T-cell (primary cell): ENCODE measurements at regions of chr17 and their contacts with region 1.

Region 1: DNA sequence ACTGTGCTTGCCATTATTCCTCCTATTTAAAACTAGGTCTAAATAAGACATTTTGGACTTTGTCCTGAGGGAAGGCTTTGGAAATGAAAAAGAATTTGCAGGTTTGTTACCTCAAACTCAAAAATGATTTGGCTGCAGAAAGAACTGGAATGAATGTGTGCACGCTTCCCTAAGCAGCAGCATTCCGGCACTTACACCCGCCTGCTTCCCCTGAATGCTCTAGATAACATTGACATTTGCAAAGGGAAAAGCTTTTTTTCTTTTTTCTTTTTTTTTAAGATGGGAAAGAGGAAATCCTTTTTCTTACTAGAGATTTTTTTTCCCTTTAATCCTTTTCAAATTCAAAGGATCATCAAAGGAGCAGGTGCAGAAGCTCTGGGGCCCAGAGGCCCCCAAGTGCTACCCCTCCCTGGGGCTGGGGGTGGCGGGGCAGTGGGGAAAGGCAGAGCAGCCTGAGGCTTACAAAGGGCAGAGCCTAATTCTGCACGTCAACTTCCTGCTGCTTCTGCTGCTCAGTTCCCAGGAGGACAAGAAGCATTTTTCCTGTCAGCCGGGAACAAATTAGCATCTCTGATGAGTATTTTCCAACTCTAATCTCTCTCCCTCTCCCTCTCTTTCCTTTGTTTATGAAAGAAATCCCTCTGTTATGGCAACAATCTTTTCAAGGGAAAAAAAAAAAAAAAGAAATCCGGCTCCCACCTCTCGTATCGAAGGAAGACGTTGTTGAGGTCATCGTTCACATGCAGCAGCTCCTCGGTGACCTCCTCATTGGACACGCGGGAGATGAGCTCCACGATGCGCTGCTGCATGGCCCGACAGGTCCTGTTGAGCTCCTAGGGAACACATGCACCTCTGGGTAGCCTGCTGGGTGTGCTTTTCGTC is 32.1 kb upstream of the SREBF1 start:
- DNase-seq: no peak
- ATAC-seq: no peak
- H3K4me3 ChIP-seq: no peak overlapping the region
- H3K4me3 Mint-ChIP-seq: no peak overlapping the region
- H3K27ac ChIP-seq: no peak overlapping the region
- H3K27ac Mint-ChIP-seq: no peak overlapping the region
- H3K4me1 ChIP-seq: peaks cover 2% of the 10 kb centered on the region in 2 experiments
- H3K4me1 Mint-ChIP-seq: peaks cover 5 to 9% (median 7%) of the 10 kb centered on the region in 3 donors
- H3K27me3 ChIP-seq: no peaks in the 10 kb centered on the region
- H3K27me3 Mint-ChIP-seq: no peaks in the 10 kb centered on the region

Region 2: GRCh38 chr17:17696085-17696484 is 172.8 kb before region 1 on chr17:
- CTCF ChIA-PET with region 1: interaction called in 1 of 2 experiments, 14 read pairs
- POLR2A ChIA-PET with region 1: interaction called in 1 of 2 experiments, 4 read pairs
- DNase-seq: no peak
- ATAC-seq: no peak
- H3K4me3 ChIP-seq: no peak overlapping the region
- H3K4me3 Mint-ChIP-seq: peak overlapping the region; percentile 86 to 89 (median 86)
- H3K27ac ChIP-seq: no peak overlapping the region
- H3K27ac Mint-ChIP-seq: peak overlapping the region; percentile 94 to 96
- H3K4me1 ChIP-seq: peaks cover 42 to 57% of the 10 kb centered on the region in 2 experiments
- H3K4me1 Mint-ChIP-seq: peaks cover 54 to 56% (median 55%) of the 10 kb centered on the region in 3 donors
- H3K27me3 ChIP-seq: no peaks in the 10 kb centered on the region
- H3K27me3 Mint-ChIP-seq: no peaks in the 10 kb centered on the region

Region 3: GRCh38 chr17:17849845-17850373 is 19.0 kb before region 1 on chr17:
- CTCF ChIA-PET with region 1: no interaction called
- POLR2A ChIA-PET with region 1: no interaction called
- DNase-seq: peak; percentile 33 to 84 (median 73)
- ATAC-seq: peak; percentile 36 to 68 (median 50)
- H3K4me3 ChIP-seq: no peak overlapping the region
- H3K4me3 Mint-ChIP-seq: peak overlapping the region in 2 of 3 donors; percentile 14 to 76
- H3K27ac ChIP-seq: peak overlapping the region; percentile 93
- H3K27ac Mint-ChIP-seq: peak overlapping the region; percentile 97
- H3K4me1 ChIP-seq: peaks cover 43 to 71% of the 10 kb centered on the region in 2 experiments
- H3K4me1 Mint-ChIP-seq: peaks cover 74 to 78% (median 76%) of the 10 kb centered on the region in 3 donors
- H3K27me3 ChIP-seq: no peaks in the 10 kb centered on the region
- H3K27me3 Mint-ChIP-seq: no peaks in the 10 kb centered on the region